ENCODE measurements at regions of chr7 and their contacts with region 1.

Region 1: GRCh38 chr7:25259587-25260243 is 31.4 kb upstream of the NPVF start:
- DNase-seq: peak; percentile 20 to 55
- ATAC-seq: peak; percentile 69 to 94
- H3K4me3 ChIP-seq: no peak overlapping the region
- H3K27ac ChIP-seq: no peak overlapping the region
- H3K4me1 ChIP-seq: peaks cover 0 to 7% of the 10 kb centered on the region in 2 donors
- H3K27me3 ChIP-seq: no peaks in the 10 kb centered on the region
- CTCF ChIP-seq: peak; percentile 49 to 77 (median 74)
- POLR2A ChIP-seq: no peak

Region 2: DNA sequence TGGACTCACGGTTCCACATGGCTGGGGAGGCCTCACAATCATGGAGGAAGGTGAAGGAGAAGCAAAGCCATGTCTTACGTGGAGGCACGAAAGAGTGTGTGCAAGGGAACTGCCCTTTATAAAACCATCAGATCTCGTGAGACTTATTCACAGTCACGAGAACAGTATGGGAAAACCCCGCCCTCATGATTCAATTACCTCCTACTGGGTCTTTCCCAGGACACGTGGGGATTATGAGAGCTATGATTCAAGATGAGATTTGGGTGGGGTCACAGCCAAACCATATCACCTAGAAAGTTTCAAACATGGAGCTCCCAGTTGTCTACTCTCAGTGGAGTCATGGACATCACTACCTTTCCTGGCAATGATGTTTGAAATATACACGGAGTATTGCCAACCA is 184.3 kb before region 1 on chr7:
- in situ Hi-C with region 1: no loop called
- intact Hi-C with region 1: no loop called
- DNase-seq: no peak
- ATAC-seq: no peak
- H3K4me3 ChIP-seq: no peak overlapping the region
- H3K27ac ChIP-seq: no peak overlapping the region
- H3K4me1 ChIP-seq: no peaks in the 10 kb centered on the region
- H3K27me3 ChIP-seq: no peaks in the 10 kb centered on the region
- CTCF ChIP-seq: no peak
- POLR2A ChIP-seq: no peak

Region 3: DNA sequence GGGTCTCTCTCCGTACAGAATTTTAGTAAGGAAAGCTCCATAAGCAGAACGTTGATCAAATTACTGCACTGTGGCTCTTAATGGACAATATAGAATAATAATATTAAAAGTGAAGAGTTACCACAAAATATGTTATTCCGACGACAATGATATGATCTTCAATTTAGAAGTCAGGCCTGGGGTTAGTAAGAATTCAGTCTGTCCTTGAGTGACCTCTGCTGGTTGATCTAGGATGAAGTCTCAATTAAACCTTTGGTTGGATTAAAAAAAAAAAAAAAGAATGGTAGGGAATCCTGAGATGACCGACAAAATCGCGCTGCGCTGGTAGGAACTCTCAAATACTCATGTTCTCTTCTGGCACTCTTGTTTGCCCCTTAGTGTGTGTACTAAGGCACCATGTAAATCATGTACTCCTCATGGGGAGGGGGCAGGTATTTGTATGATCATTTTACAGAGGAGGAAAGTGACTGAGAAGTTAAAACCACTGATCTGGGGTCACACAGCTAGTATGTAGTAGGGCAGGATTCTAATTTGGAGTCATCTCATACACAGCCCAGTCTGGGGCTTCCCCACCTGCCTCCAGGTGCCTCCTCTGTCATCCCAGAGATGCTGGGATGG is 129.9 kb after region 1 on chr7:
- in situ Hi-C with region 1: loop called in 2 of 4 experiments (anchors 5 kb)
- intact Hi-C with region 1: loop called (anchors 2 kb)
- DNase-seq: no peak
- ATAC-seq: no peak
- H3K4me3 ChIP-seq: no peak overlapping the region
- H3K27ac ChIP-seq: no peak overlapping the region
- H3K4me1 ChIP-seq: no peaks in the 10 kb centered on the region
- H3K27me3 ChIP-seq: no peaks in the 10 kb centered on the region
- CTCF ChIP-seq: peak in 2 of 5 experiments; percentile 29 to 39
- POLR2A ChIP-seq: no peak

Region 4: GRCh38 chr7:25557379-25557917 is 297.7 kb after region 1 on chr7:
- in situ Hi-C with region 1: loop called in 2 of 4 experiments (anchors 5 to 10 kb)
- intact Hi-C with region 1: no loop called
- DNase-seq: no peak
- ATAC-seq: no peak
- H3K4me3 ChIP-seq: no peak overlapping the region
- H3K27ac ChIP-seq: no peak overlapping the region
- H3K4me1 ChIP-seq: peaks cover 0 to 6% of the 10 kb centered on the region in 2 donors
- H3K27me3 ChIP-seq: peaks cover 0 to 2% (median 0%) of the 10 kb centered on the region in 3 donors
- CTCF ChIP-seq: no peak
- POLR2A ChIP-seq: no peak

Region 5: GRCh38 chr7:25565949-25566348 is 306.2 kb after region 1 on chr7:
- in situ Hi-C with region 1: loop called in 3 of 4 experiments (anchors 5 to 10 kb)
- intact Hi-C with region 1: loop called (anchors 1 kb)
- DNase-seq: peak; percentile 38 to 49
- ATAC-seq: peak; percentile 40 to 76
- H3K4me3 ChIP-seq: peak overlapping the region in 1 of 4 donors; percentile 30
- H3K27ac ChIP-seq: no peak overlapping the region
- H3K4me1 ChIP-seq: peaks cover 13 to 21% of the 10 kb centered on the region in 2 donors
- H3K27me3 ChIP-seq: no peaks in the 10 kb centered on the region
- CTCF ChIP-seq: peak; percentile 91 to 100 (median 99)
- POLR2A ChIP-seq: no peak

Region 6: DNA sequence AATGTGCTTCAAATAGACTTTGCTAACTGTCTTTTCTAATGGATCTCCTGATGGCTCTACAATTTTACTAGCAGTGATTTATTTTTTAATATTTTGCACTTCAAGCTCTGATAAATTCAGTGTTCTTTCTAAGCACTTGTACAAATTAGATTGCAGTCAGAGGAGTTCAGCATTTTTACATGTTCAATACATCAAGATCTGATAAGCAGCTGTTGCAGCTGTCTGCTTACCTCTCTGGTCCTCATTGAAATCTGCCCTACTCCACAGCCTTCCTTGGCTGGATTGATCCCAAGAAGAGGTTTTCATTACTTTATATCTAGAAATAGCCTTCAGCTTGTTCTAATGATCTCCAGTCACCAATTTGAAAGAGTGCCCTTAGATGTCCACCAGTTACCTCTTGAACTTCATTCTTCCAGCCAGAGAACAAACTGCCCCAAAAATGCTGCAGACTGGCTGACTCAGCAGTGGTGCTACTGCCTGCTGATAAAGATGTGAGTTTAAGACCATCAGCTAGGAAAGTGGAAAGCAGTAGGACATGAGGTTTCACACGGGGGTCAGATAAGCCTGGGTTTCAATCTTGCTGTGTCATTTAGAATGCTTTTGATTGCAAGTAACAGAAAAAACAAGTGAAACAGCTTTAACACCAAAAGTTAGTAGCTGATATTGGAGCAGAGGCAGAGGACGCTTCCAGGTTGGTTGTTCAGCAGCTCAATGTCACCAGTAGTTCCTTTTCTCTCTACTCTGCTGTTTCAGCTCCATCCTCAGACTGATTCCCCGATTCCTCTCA is 319.5 kb after region 1 on chr7:
- in situ Hi-C with region 1: loop called in 2 of 4 experiments (anchors 10 kb)
- intact Hi-C with region 1: no loop called
- DNase-seq: no peak
- ATAC-seq: no peak
- H3K4me3 ChIP-seq: no peak overlapping the region
- H3K27ac ChIP-seq: no peak overlapping the region
- H3K4me1 ChIP-seq: no peaks in the 10 kb centered on the region
- H3K27me3 ChIP-seq: no peaks in the 10 kb centered on the region
- CTCF ChIP-seq: no peak
- POLR2A ChIP-seq: no peak

Region 7: GRCh38 chr7:25886387-25887240 is 626.9 kb after region 1 on chr7:
- in situ Hi-C with region 1: no loop called
- intact Hi-C with region 1: no loop called
- DNase-seq: no peak
- ATAC-seq: peak; percentile 87 to 95
- H3K4me3 ChIP-seq: no peak overlapping the region
- H3K27ac ChIP-seq: peak overlapping the region; percentile 67 to 78 (median 76)
- H3K4me1 ChIP-seq: peaks cover 12 to 14% of the 10 kb centered on the region in 2 donors
- H3K27me3 ChIP-seq: no peaks in the 10 kb centered on the region
- CTCF ChIP-seq: no peak
- POLR2A ChIP-seq: no peak